ENCODE measurements at regions of chr5 and their contacts with region 1.

Region 1: GRCh38 chr5:94632024-94632423 is 13.6 kb downstream of the SLF1 start:
- DNase-seq: no peak
- ATAC-seq: no peak
- H3K4me3 Mint-ChIP-seq: no peak overlapping the region
- H3K27ac Mint-ChIP-seq: no peak overlapping the region
- H3K4me1 Mint-ChIP-seq: peaks cover 4% of the 10 kb centered on the region
- H3K27me3 Mint-ChIP-seq: no peaks in the 10 kb centered on the region

Region 2: DNA sequence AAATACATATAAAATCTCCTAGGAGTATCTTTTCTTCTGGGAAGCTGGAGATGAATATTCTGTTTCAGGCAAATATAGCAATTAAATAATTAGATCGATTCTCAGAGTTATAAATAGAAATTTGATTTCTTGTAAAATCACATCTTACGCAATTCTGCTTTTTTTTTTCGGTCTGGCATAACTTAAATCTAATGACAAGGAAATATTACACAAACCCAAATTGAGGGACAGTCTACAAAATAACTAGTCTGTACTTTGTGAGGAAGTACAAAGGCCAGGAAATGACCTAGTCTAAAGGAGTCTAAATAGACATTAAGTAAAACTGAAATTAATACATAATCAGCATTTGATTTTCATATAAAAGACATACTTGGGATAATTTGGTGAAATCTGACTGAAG is 147.0 kb before region 1 on chr5:
- CTCF ChIA-PET with region 1: no interaction called
- POLR2A ChIA-PET with region 1: no interaction called
- intact Hi-C with region 1: no loop called
- DNase-seq: no peak
- ATAC-seq: no peak
- H3K4me3 Mint-ChIP-seq: no peak overlapping the region
- H3K27ac Mint-ChIP-seq: no peak overlapping the region
- H3K4me1 Mint-ChIP-seq: no peaks in the 10 kb centered on the region
- H3K27me3 Mint-ChIP-seq: no peaks in the 10 kb centered on the region

Region 3: GRCh38 chr5:94498199-94498598 is 133.8 kb before region 1 on chr5:
- CTCF ChIA-PET with region 1: no interaction called
- POLR2A ChIA-PET with region 1: no interaction called
- intact Hi-C with region 1: no loop called
- DNase-seq: no peak
- ATAC-seq: no peak
- H3K4me3 Mint-ChIP-seq: no peak overlapping the region
- H3K27ac Mint-ChIP-seq: no peak overlapping the region
- H3K4me1 Mint-ChIP-seq: no peaks in the 10 kb centered on the region
- H3K27me3 Mint-ChIP-seq: no peaks in the 10 kb centered on the region

Region 4: GRCh38 chr5:94674490-94675382 is 42.7 kb after region 1 on chr5:
- CTCF ChIA-PET with region 1: no interaction called
- POLR2A ChIA-PET with region 1: interaction called, 10 read pairs
- intact Hi-C with region 1: no loop called
- DNase-seq: no peak
- ATAC-seq: no peak
- H3K4me3 Mint-ChIP-seq: no peak overlapping the region
- H3K27ac Mint-ChIP-seq: no peak overlapping the region
- H3K4me1 Mint-ChIP-seq: no peaks in the 10 kb centered on the region
- H3K27me3 Mint-ChIP-seq: no peaks in the 10 kb centered on the region